ENCODE measurements at regions of chr6 and their contacts with region 1.

Region 1: GRCh38 chr6:75611702-75612375 is 10.2 kb downstream of the SENP6 start:
- DNase-seq: no peak
- ATAC-seq: peak; percentile 55
- H3K4me3 Mint-ChIP-seq: peak overlapping the region; percentile 19
- H3K27ac Mint-ChIP-seq: peak overlapping the region; percentile 55
- H3K4me1 Mint-ChIP-seq: peaks cover 46% of the 10 kb centered on the region
- H3K27me3 Mint-ChIP-seq: no peaks in the 10 kb centered on the region

Region 2: GRCh38 chr6:75601304-75602245 is 10.3 kb before region 1 on chr6 and contains the start of gene SENP6:
- POLR2A ChIA-PET with region 1: interaction called, 15 read pairs
- DNase-seq: peak; percentile 84
- ATAC-seq: peak; percentile 75
- H3K4me3 Mint-ChIP-seq: peak within 1 kb of the TSS; percentile 98
- H3K27ac Mint-ChIP-seq: peak within 1 kb of the TSS; percentile 99
- H3K4me1 Mint-ChIP-seq: peaks cover 39% of the 10 kb centered on the region
- H3K27me3 Mint-ChIP-seq: no peaks in the 10 kb centered on the region
- total RNA-seq, gene SENP6: 83.7 to 97.0 TPM